ENCODE measurements at regions of chr17 and their contacts with region 1.

Region 1: DNA sequence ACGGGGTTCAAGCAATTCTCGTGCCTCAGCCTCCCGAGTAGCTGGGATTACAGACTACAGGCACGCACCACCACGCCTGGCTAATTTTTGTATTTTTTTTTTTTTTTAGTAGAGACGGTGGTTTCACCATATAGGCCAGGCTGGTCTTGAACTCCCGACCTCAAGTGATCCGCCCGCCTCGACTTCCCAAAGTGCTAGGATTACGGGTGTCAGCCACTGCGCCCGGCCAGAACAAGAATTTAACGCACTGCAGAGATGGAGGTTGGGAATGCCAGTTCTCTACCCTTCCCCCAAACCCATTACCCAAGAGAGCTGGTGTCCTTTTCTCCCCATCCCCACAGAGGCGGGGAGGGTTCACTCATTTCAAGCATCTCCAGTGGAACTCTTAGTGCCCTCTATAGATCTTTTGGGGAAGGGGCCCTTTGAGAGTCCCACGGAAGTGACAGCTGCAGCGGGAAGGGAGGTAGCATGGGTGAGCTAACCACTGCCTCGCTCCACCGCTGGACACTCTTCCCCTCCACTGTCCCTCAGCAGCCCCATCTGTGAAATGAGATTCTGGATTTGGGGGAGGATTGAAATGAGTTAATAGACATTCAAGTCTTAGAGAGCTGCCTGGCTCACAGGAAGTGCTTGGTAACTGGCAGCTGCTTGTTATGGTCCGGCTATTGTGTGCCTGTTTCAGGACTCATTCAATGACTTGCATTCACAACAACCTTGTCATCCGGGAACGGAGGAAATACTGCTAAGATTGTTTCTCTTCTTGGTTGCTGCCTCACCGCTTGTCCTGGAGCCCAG is 3.5 kb upstream of the UBALD2 start:
- DNase-seq: no peak

Region 2: DNA sequence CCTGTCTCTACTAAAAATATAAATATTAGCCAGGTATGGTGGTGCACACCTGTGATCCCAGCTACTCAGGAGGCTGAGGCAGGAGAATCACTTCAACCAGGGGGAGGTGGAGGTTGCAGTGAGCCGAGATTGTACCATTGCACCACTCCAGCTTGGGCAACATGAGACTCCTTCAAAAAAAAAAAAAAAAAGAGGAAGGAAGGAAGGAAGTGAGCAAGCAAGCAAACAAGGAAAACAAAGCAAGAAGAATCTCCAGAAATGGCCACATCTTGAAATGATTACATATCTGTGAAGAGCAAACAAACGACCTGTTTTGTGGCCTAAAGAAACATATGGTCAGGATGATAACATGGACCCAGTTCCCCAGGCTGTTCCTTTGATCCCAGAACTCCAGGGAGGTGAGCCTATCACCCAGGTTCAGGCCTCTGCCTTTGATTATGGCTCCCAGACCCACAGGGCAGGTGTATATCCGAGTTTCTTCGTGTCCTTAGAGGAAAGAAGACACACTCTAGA is 291.6 kb before region 1 on chr17:
- intact Hi-C with region 1: loop called in 1 of 2 experiments (anchors 2 kb)
- DNase-seq: no peak